Keratinocyte (primary cell): ENCODE measurements at regions of chr15 and their contacts with region 1.

Region 1: DNA sequence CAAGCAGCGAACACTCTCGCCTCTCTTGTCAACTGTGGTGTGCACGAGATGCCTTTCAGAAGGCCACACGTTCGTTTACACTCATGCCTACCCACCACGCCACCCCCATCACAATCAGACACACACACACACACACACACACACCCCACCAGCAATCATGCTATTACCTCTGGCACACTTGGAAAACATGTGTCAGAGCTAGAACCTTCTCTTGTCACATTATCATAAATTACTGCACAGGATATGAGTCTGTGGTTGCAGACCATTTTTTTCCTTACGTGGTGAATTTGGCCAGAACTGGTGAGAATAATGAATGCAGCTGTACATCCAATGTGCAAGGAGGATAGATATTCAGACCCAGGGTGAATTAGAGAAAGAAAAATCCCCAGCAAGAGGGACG is 52.4 kb downstream of the TRIM69 start:
- DNase-seq: no peak
- H3K4me3 ChIP-seq: no peak overlapping the region
- H3K27ac ChIP-seq: no peak overlapping the region
- H3K4me1 ChIP-seq: peaks cover 3% of the 10 kb centered on the region
- H3K27me3 ChIP-seq: peaks cover 9% of the 10 kb centered on the region
- CTCF ChIP-seq: no peak

Region 2: GRCh38 chr15:44711356-44712107 is 77.2 kb before region 1 on chr15 and contains the start of gene B2M:
- dilution Hi-C with region 1: no loop called
- DNase-seq: peak; percentile 81
- H3K4me3 ChIP-seq: peak within 1 kb of the TSS; percentile 85 to 98 (median 95)
- H3K27ac ChIP-seq: peak within 1 kb of the TSS; percentile 95
- H3K4me1 ChIP-seq: peaks cover 16% of the 10 kb centered on the region
- H3K27me3 ChIP-seq: no peaks in the 10 kb centered on the region
- CTCF ChIP-seq: no peak
- polyA plus RNA-seq, gene B2M: 2,930 to 4,328 TPM (median 3,098 TPM) in 3 replicates

Region 3: GRCh38 chr15:44738340-44738984 is 50.3 kb before region 1 on chr15:
- dilution Hi-C with region 1: loop called (anchors 5 kb)
- DNase-seq: no peak
- H3K4me3 ChIP-seq: no peak overlapping the region
- H3K27ac ChIP-seq: no peak overlapping the region
- H3K4me1 ChIP-seq: no peaks in the 10 kb centered on the region
- H3K27me3 ChIP-seq: no peaks in the 10 kb centered on the region
- CTCF ChIP-seq: peak in 2 of 3 experiments; percentile 52 to 66